ENCODE measurements at regions of chr14 and their contacts with region 1.

Region 1: GRCh38 chr14:75050852-75051554 is at the start of gene MLH3:
- DNase-seq: peak; percentile 82
- H3K4me3 Mint-ChIP-seq: peak within 1 kb of the TSS; percentile 92
- H3K27ac Mint-ChIP-seq: peak within 1 kb of the TSS; percentile 86
- H3K4me1 Mint-ChIP-seq: peaks cover 70% of the 10 kb centered on the region
- H3K27me3 Mint-ChIP-seq: no peaks in the 10 kb centered on the region
- total RNA-seq, gene MLH3: 19.7 to 21.2 TPM

Region 2: DNA sequence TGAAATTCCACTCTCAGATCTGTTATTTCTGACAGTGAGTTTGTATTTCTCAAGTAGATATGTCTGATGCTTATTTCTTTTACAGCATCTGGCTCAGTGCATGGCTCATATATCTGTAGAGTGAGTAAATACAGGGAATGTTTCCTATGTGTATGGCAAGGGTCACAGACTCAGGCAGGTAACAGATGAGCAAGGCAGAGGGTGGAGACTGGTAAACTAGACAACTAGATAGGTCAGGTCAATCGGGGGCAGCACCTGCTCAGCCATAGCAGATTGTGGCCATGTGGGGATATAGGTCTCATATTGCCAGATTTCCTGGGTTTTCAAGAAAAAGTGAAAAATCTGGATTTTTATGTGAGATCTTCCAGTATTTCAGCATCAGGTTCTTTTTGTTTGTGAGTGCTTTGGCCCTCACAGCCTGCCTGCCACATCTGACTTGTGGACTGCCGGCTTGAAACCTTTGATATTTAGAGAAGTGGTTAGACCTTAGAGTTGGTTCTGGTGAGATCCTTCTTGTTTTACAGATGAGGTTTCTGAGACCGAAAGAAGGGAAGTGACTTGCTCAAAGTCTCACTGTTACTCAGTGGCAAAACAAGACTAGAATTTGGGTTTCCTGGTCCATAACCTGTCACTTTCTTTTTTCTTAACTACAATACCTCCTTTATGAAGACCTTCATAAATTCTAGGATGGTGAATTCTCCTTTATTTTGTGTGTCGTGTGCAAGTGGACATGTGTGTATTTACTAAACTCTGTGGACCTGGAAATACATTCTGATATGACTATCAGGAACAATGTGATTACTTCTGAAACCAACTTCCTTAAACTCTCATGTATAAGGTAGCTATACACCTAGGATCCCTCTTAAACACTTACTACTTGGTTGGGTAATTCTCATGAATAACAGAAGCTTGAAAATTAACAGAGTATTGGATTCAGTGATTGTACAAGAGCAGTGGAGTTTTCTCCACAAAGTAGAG is 209.5 kb before region 1 on chr14:
- CTCF ChIA-PET with region 1: no interaction called
- POLR2A ChIA-PET with region 1: no interaction called
- intact Hi-C with region 1: loop called (anchors 1 kb)
- DNase-seq: peak; percentile 49
- H3K4me3 Mint-ChIP-seq: no peak overlapping the region
- H3K27ac Mint-ChIP-seq: peak overlapping the region; percentile 83
- H3K4me1 Mint-ChIP-seq: peaks cover 55% of the 10 kb centered on the region
- H3K27me3 Mint-ChIP-seq: no peaks in the 10 kb centered on the region

Region 3: GRCh38 chr14:75063407-75064213 is 12.6 kb after region 1 on chr14 and contains the start of gene ACYP1:
- CTCF ChIA-PET with region 1: interaction called, 4 read pairs
- POLR2A ChIA-PET with region 1: no interaction called
- intact Hi-C with region 1: loop called (anchors 2 kb)
- DNase-seq: peak; percentile 96
- H3K4me3 Mint-ChIP-seq: peak within 1 kb of the TSS; percentile 99
- H3K27ac Mint-ChIP-seq: peak within 1 kb of the TSS; percentile 95
- H3K4me1 Mint-ChIP-seq: peaks cover 37% of the 10 kb centered on the region
- H3K27me3 Mint-ChIP-seq: no peaks in the 10 kb centered on the region
- total RNA-seq, gene ACYP1: 41.3 to 45.8 TPM

Measured in activated CD4-positive, alpha-beta memory T cell treated with anti-CD3 and anti-CD28 coated beads for 36 hours (primary cell).